H1 (cell line): ENCODE measurements at regions of chr6 and their contacts with region 1.

Region 1: GRCh38 chr6:157667211-157668008 is 155.6 kb upstream of the SNX9 start:
- DNase-seq: peak in 1 of 2 experiments; percentile 69
- H3K4me3 ChIP-seq: no peak overlapping the region
- H3K27ac ChIP-seq: no peak overlapping the region
- H3K4me1 ChIP-seq: peaks cover 3 to 14% (median 6%) of the 10 kb centered on the region in 4 experiments; a peak in 6 of 7 replicates
- H3K27me3 ChIP-seq: no peaks in the 10 kb centered on the region; a peak in 1 of 7 replicates
- CTCF ChIP-seq: peak; percentile 39 to 70 (median 68)
- EP300 ChIP-seq: no peak
- POLR2A ChIP-seq: no peak
- RAD21 ChIP-seq: peak; percentile 86

Region 2: DNA sequence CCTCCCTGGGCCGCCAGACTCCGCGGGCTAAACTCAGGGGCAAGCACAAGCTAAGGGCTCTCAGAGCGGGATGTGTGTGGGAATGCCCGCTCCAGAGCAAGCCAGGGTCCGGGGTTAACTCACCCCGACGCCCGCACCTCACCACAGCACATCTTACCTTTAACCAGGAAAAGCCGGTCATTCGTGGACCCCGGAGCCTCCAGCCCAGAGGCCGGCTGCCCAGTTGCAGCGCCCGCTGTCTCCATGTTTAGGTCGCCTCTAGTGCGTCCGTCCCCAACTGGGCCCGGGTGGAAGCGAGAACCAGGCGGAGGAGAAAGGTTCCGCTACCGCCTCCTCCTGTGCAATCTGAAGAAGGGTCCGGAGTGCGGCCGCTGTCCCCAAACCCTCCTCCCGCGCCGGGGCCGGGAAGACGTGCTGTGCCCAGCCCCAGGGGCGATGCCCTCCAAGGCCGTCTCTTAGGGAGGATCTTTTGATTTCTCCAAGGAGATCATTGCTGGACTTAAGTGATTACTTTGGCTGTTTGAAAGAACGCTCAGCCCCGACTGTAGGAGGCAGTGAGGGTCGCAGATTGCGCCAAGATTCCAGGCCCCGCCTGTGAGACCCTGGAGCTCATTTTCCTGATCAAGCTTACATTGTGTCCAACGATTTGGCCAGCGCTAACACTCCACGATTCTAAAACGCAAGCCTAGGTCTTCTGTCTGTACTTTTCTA is 344.0 kb before region 1 on chr6 and contains the start of gene TMEM242:
- CTCF ChIA-PET with region 1: interaction called, 23 read pairs
- POLR2A ChIA-PET with region 1: interaction called, 10 read pairs
- DNase-seq: peak in 1 of 2 experiments; percentile 98
- H3K4me3 ChIP-seq: peak within 1 kb of the TSS; percentile 87 to 99 (median 94)
- H3K27ac ChIP-seq: peak within 1 kb of the TSS; percentile 81
- H3K4me1 ChIP-seq: no peaks in the 10 kb centered on the region; a peak in 1 of 7 replicates
- H3K27me3 ChIP-seq: peaks cover 0 to 2% (median 0%) of the 10 kb centered on the region in 4 experiments; a peak in 2 of 7 replicates
- CTCF ChIP-seq: peak in 1 of 3 experiments; percentile 11; a peak in 2 of 4 replicates
- EP300 ChIP-seq: peak; percentile 13 to 75; a peak in 2 of 3 replicates
- POLR2A ChIP-seq: peak; percentile 90 to 98
- RAD21 ChIP-seq: no peak; a peak in 1 of 4 replicates
- total RNA-seq, gene TMEM242: 8.2 and 9.0 TPM in 2 replicates

Region 3: GRCh38 chr6:157614026-157614568 is 53.3 kb before region 1 on chr6:
- CTCF ChIA-PET with region 1: interaction called, 10 read pairs
- POLR2A ChIA-PET with region 1: no interaction called
- DNase-seq: no peak
- H3K4me3 ChIP-seq: no peak overlapping the region
- H3K27ac ChIP-seq: no peak overlapping the region
- H3K4me1 ChIP-seq: no peaks in the 10 kb centered on the region
- H3K27me3 ChIP-seq: no peaks in the 10 kb centered on the region
- CTCF ChIP-seq: peak in 1 of 3 experiments; percentile 19; a peak in 2 of 4 replicates
- EP300 ChIP-seq: no peak
- POLR2A ChIP-seq: no peak
- RAD21 ChIP-seq: peak; percentile 41 to 58

Region 4: GRCh38 chr6:157679605-157680580 is 12.5 kb after region 1 on chr6:
- CTCF ChIA-PET with region 1: interaction called, 12 read pairs
- POLR2A ChIA-PET with region 1: no interaction called
- DNase-seq: no peak
- H3K4me3 ChIP-seq: no peak overlapping the region
- H3K27ac ChIP-seq: no peak overlapping the region
- H3K4me1 ChIP-seq: no peaks in the 10 kb centered on the region
- H3K27me3 ChIP-seq: no peaks in the 10 kb centered on the region
- CTCF ChIP-seq: no peak
- EP300 ChIP-seq: no peak
- POLR2A ChIP-seq: no peak
- RAD21 ChIP-seq: no peak